Activated B cell treated with CpG ODN at 0.5 μM for 24 hours (primary cell): ENCODE measurements at regions of chr2 and their contacts with region 1.

Region 1: GRCh38 chr2:62340994-62341484 is 145.1 kb downstream of the B3GNT2 start:
- DNase-seq: no peak
- ATAC-seq: no peak
- H3K4me3 Mint-ChIP-seq: no peak overlapping the region
- H3K27ac Mint-ChIP-seq: no peak overlapping the region
- H3K4me1 Mint-ChIP-seq: peaks cover 18% of the 10 kb centered on the region
- H3K27me3 Mint-ChIP-seq: no peaks in the 10 kb centered on the region
- CTCF ChIP-seq: no peak

Region 2: DNA sequence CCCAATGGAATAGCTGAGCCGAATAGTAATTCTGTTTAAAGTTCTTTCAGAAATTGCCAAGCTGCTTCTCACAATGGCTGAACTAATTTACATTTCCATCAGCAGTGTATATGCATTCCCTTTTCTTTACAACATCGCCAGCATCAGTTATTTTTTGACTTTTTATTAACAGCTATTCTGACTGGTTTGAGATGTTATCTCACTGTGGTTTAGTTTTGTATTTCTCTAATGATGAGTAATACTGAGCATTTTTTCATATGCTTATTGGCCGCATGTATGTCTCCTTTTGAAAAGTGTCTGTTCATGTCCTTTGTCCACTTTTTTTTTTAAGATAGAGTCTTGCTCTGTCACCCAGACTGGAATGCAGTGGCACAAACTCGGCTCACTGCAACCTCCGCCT is 1078.3 kb before region 1 on chr2:
- CTCF ChIA-PET with region 1: no interaction called
- POLR2A ChIA-PET with region 1: no interaction called
- intact Hi-C with region 1: no loop called
- DNase-seq: no peak
- ATAC-seq: no peak
- H3K4me3 Mint-ChIP-seq: no peak overlapping the region
- H3K27ac Mint-ChIP-seq: no peak overlapping the region
- H3K4me1 Mint-ChIP-seq: no peaks in the 10 kb centered on the region
- H3K27me3 Mint-ChIP-seq: no peaks in the 10 kb centered on the region
- CTCF ChIP-seq: no peak

Region 3: GRCh38 chr2:61910603-61911002 is 430.4 kb before region 1 on chr2:
- CTCF ChIA-PET with region 1: no interaction called
- POLR2A ChIA-PET with region 1: no interaction called
- intact Hi-C with region 1: loop called (anchors 5 kb)
- DNase-seq: no peak
- ATAC-seq: no peak
- H3K4me3 Mint-ChIP-seq: no peak overlapping the region
- H3K27ac Mint-ChIP-seq: no peak overlapping the region
- H3K4me1 Mint-ChIP-seq: peaks cover 6% of the 10 kb centered on the region
- H3K27me3 Mint-ChIP-seq: no peaks in the 10 kb centered on the region
- CTCF ChIP-seq: no peak

Region 4: DNA sequence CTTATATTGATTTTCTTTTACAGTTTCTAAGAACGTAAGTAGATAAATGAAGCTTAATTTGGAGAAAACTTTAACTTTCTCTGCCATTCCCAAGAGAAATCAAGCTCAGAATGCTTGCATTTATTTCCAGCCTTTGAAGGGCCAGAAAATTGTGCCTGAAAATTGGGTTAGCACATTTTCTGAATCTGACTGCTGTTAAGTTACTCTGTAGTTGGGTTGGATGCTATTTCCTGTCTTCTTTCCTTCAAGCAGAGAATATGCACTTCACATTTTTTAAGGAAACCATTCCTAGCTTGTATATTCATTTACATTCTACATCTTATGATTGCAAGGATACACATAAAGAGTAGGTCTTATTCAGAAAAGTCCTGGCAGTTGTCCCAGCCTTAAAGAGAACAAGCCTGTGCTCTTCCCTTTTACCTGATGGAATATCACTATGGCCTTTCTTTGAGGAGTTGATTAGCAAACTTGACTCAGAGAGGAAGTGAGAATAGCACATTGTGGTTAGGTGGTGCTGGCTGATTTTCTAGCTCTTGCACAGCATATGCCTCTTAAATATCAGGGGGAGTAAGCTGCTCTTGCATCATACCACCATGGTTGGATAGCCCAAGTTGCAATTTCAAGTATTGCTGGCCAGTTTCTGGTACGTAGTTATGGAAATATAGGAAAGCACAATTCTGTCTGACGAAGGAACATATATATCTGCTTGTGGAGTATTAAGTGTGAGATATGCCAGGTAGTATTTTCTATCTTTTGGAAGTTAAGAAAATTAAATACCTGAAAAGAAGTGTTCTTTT is 301.9 kb before region 1 on chr2:
- CTCF ChIA-PET with region 1: no interaction called
- POLR2A ChIA-PET with region 1: no interaction called
- intact Hi-C with region 1: loop called (anchors 1 kb)
- DNase-seq: no peak
- ATAC-seq: peak; percentile 96
- H3K4me3 Mint-ChIP-seq: peak overlapping the region; percentile 64
- H3K27ac Mint-ChIP-seq: peak overlapping the region; percentile 86
- H3K4me1 Mint-ChIP-seq: peaks cover 30% of the 10 kb centered on the region
- H3K27me3 Mint-ChIP-seq: no peaks in the 10 kb centered on the region
- CTCF ChIP-seq: no peak

Region 5: DNA sequence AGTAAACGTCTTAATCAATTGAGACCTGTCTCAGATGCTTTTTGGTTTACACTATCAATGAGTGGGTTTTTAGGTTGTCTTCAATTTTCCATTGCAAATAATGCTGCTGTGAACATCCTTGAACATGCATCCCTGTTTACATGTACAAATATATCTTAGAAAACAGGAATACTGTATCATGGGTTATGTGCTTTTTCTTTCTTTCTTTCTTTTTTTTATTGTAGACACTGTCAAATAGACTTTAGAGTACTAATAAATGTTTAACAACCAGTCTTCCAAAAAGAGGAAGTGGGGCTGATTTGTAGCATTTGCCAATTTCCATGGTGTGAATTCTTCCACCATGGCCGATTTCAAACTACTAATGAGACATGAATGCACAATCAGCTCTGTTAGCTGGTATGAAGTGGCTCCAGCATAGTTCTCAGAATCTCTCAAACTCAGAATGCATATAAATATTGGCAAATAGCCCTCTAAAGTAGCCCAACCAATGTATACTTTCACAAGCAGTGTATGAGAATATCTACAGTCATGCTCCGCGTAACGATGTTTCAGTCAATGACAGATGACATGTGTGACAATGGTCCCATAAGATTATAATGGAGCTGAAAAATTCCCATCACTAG is 195.4 kb before region 1 on chr2:
- CTCF ChIA-PET with region 1: no interaction called
- POLR2A ChIA-PET with region 1: no interaction called
- intact Hi-C with region 1: loop called (anchors 1 kb)
- DNase-seq: no peak
- ATAC-seq: peak; percentile 51
- H3K4me3 Mint-ChIP-seq: peak overlapping the region; percentile 28
- H3K27ac Mint-ChIP-seq: peak overlapping the region; percentile 57
- H3K4me1 Mint-ChIP-seq: peaks cover 53% of the 10 kb centered on the region
- H3K27me3 Mint-ChIP-seq: no peaks in the 10 kb centered on the region
- CTCF ChIP-seq: no peak

Region 6: GRCh38 chr2:62287899-62288880 is 52.8 kb before region 1 on chr2:
- CTCF ChIA-PET with region 1: no interaction called
- POLR2A ChIA-PET with region 1: no interaction called
- intact Hi-C with region 1: no loop called
- DNase-seq: no peak
- ATAC-seq: no peak
- H3K4me3 Mint-ChIP-seq: no peak overlapping the region
- H3K27ac Mint-ChIP-seq: no peak overlapping the region
- H3K4me1 Mint-ChIP-seq: peaks cover 4% of the 10 kb centered on the region
- H3K27me3 Mint-ChIP-seq: peaks cover 2% of the 10 kb centered on the region
- CTCF ChIP-seq: no peak

Region 7: DNA sequence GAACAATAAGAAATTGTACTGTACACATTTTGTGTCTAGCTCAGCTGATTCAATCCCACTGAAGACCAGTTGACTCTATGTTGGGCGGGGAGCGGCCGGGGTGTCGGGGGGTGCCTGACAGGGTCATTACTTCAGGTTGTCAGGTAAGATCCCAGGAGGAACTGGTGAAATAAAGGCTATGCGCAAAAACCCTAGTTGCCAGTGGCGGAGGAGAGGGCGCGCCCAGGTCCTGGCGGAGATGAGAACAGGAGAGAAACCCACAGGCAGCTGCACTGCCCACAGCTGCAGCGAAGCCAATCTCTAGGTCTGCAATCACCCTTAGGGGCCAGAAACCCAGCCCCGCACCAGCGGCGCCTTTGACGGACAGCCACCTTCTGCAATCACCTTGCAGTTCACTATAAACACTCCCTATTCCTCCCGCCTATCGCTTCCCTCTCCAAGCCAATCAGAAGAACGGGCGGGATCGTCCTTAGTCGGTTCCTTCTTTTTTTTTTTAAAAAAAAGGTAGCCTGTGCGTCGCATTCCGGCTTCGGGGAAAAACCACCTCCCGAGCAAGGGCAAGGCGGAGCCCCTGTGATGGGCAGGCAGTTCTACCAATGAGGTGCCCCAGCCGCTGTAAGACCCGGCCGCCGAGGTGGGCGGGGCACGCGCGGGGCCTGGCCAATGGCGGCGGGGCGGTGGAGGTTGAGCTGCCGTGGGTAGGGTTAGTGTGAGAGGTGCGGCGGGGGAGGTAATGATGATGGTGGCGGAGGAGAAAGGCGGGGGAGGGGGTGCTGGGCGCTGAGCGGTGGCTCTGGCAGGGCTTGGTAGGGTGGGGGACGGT is 364.2 kb after region 1 on chr2 and contains the start of gene EHBP1:
- CTCF ChIA-PET with region 1: no interaction called
- POLR2A ChIA-PET with region 1: no interaction called
- intact Hi-C with region 1: loop called (anchors 1 kb)
- DNase-seq: peak; percentile 98
- ATAC-seq: peak; percentile 93
- H3K4me3 Mint-ChIP-seq: peak within 1 kb of the TSS; percentile 95
- H3K27ac Mint-ChIP-seq: peak within 1 kb of the TSS; percentile 78
- H3K4me1 Mint-ChIP-seq: peaks cover 34% of the 10 kb centered on the region
- H3K27me3 Mint-ChIP-seq: no peaks in the 10 kb centered on the region
- CTCF ChIP-seq: no peak
- total RNA-seq, gene EHBP1: 24.0 and 25.0 TPM in 2 replicates